ENCODE measurements at regions of chr7 and their contacts with region 1.

Region 1: DNA sequence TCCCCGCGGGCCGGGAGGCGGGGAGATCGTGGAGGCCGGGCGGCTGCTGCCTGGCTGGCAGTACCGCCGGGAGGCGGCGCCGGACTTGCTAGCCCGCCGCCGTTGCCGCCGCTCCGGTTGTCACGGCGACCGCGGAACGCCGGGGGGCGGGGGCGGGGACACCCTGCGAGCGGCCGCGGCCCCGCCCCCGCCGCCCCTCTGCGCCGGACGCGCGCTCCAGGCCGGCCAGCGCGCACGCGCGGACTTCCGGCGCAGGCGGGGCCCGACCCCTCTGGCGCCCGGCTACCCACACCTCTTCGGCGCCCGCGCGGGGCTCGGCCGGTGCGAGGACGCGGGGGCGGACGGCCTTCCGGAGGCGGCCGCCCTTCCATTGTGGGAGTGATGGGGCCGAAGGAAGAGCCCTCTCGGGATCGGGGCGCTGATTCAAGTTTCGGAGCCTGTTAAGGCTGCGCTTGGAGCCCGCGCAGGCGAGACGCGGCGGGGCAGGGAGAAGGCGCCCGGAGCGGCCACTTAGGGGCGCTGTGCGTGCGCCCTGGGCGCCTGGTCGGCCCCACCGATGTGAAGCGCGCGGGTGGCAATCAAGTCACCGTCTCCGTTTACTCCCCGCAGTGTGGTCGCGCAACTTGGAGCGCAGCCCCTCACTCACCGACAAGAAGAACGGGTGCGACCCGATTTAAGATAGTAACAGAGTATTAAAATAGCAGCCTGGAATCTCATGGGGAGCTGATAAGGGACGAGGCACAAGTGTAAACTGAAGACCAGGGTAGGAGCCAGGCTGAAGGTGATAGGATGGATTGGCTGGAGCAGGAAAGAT is 448 bp upstream of the DPY19L1 start:
- DNase-seq: peak; percentile 66 to 96 (median 86)
- ATAC-seq: peak; percentile 73
- H3K4me3 ChIP-seq: peak overlapping the region; percentile 49
- H3K4me3 Mint-ChIP-seq: peak overlapping the region; percentile 92
- H3K27ac ChIP-seq: no peak overlapping the region
- H3K27ac Mint-ChIP-seq: peak overlapping the region; percentile 34
- H3K4me1 ChIP-seq: peaks cover 21% of the 10 kb centered on the region
- H3K4me1 Mint-ChIP-seq: peaks cover 30% of the 10 kb centered on the region
- H3K27me3 ChIP-seq: no peaks in the 10 kb centered on the region
- H3K27me3 Mint-ChIP-seq: no peaks in the 10 kb centered on the region
- CTCF ChIP-seq: peak; percentile 73

Region 2: DNA sequence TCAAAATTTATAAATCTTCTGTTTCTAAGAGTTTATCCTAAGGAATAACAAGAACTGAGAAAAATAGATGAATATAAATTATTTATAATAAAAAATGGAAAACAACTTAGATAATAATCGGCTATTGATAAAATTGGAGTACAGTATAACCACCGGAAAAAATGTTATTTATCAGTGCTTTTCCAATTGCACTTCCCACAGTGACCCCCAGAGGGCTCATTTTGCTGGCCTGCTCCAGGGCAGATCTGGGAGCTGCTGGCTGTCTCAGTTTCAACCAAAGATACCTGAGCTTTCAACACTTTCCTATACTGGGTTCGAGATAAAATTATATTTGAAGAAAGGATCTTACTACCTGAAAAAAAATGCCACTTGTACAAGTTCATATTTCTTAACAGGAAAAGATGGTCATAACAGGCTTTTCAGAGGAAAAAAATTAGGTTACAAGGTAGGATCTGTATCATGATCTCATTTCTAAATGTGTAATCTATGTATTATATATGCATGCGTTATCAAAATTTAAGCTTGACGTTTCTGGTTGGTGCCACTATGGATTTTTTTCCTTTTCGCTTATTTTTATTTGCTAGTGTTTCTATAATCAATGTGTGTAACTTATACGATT is 214.0 kb before region 1 on chr7:
- CTCF ChIA-PET with region 1: no interaction called
- POLR2A ChIA-PET with region 1: interaction called, 4 read pairs
- intact Hi-C with region 1: loop called in 1 of 2 experiments (anchors 2 kb)
- DNase-seq: peak; percentile 16 to 68 (median 47)
- ATAC-seq: peak; percentile 51
- H3K4me3 ChIP-seq: no peak overlapping the region
- H3K4me3 Mint-ChIP-seq: no peak overlapping the region
- H3K27ac ChIP-seq: no peak overlapping the region
- H3K27ac Mint-ChIP-seq: no peak overlapping the region
- H3K4me1 ChIP-seq: no peaks in the 10 kb centered on the region
- H3K4me1 Mint-ChIP-seq: no peaks in the 10 kb centered on the region
- H3K27me3 ChIP-seq: no peaks in the 10 kb centered on the region
- H3K27me3 Mint-ChIP-seq: no peaks in the 10 kb centered on the region
- CTCF ChIP-seq: peak; percentile 93

Region 3: DNA sequence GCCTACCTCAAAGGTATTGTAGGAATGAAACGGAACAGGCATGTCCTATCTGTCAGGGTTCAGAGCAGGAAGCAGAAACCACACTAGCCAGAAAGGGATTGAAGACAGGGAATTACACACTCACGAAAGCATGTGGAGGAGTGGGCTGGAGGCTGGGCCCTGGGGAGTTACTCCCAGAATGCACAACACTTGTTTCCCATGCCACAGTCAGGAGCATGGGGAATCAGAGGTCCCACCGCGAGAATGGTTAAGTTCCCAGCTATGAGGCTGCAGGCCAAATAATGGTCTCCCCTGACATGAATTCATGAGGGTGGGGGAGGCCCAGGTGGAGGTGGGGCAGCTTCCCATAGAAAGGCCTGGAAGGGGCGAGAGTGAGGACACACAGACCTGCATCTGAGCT is 444.5 kb after region 1 on chr7:
- CTCF ChIA-PET with region 1: no interaction called
- POLR2A ChIA-PET with region 1: no interaction called
- intact Hi-C with region 1: no loop called
- DNase-seq: no peak
- ATAC-seq: no peak
- H3K4me3 ChIP-seq: no peak overlapping the region
- H3K4me3 Mint-ChIP-seq: no peak overlapping the region
- H3K27ac ChIP-seq: no peak overlapping the region
- H3K27ac Mint-ChIP-seq: no peak overlapping the region
- H3K4me1 ChIP-seq: no peaks in the 10 kb centered on the region
- H3K4me1 Mint-ChIP-seq: no peaks in the 10 kb centered on the region
- H3K27me3 ChIP-seq: peaks cover 0 to 5% of the 10 kb centered on the region in 2 experiments
- H3K27me3 Mint-ChIP-seq: peaks cover 26% of the 10 kb centered on the region
- CTCF ChIP-seq: no peak

Measured in CD4-positive, alpha-beta T cell (primary cell).